A673 (cell line): ENCODE measurements at regions of chr2 and their contacts with region 1.

Region 1: GRCh38 chr2:168773719-168774521 is 28.5 kb upstream of the NOSTRIN start:
- DNase-seq: peak; percentile 88
- H3K4me3 ChIP-seq: no peak overlapping the region
- H3K27ac ChIP-seq: no peak overlapping the region
- H3K4me1 ChIP-seq: peaks cover 4% of the 10 kb centered on the region
- H3K27me3 ChIP-seq: no peaks in the 10 kb centered on the region
- CTCF ChIP-seq: peak; percentile 97

Region 2: DNA sequence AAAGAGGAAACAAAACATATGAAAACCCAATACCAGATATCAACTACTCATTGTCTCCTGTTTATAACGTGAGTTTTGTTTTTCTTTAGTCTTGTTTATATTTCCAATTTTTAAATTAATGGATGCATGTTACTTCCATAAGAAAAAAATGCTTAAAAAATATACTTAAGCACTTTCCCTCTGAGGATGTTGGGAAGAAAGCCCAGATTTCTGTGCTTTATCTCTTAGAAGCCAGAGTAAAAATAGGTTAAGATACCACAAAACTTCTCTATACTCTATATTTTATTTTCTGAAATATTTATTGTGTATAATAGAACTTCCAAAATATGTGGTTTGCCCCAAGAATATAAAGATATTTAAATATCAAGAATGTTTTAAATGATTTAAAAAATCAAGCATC is 1160.4 kb before region 1 on chr2:
- CTCF ChIA-PET with region 1: no interaction called
- POLR2A ChIA-PET with region 1: no interaction called
- intact Hi-C with region 1: no loop called
- DNase-seq: no peak
- H3K4me3 ChIP-seq: no peak overlapping the region
- H3K27ac ChIP-seq: no peak overlapping the region
- H3K4me1 ChIP-seq: no peaks in the 10 kb centered on the region
- H3K27me3 ChIP-seq: no peaks in the 10 kb centered on the region
- CTCF ChIP-seq: no peak

Region 3: DNA sequence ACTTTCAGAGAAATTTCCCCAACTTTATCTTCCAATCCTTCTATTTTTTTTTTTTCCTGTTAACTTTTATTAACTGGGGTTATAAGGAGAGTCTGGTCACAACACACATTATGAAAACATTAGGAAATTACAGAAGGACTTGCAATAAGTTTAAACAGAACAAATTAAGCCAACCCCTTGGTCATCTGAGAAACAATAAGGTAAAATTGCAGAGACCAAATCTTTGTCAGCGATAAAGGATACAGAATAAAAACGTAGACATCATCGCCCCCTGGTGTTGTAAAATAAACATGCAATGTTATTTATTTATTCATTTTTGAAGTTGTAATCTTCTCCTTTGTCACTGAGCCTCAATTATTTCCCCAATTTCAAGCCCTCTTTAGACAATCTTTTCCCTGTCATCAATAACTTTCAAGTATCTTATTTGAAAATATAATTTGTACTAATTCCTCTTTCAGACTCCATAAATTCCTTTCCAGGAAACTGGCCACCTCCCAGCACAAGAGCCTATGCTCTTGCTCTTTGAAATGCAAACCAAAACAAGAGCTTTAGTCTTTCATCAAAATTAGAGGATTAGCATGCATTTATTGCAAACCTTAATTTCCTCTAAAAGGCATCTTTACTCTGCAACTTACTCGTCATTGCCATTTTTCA is 146.7 kb after region 1 on chr2:
- CTCF ChIA-PET with region 1: no interaction called
- POLR2A ChIA-PET with region 1: no interaction called
- intact Hi-C with region 1: loop called (anchors 1 kb)
- DNase-seq: peak; percentile 58
- H3K4me3 ChIP-seq: no peak overlapping the region
- H3K27ac ChIP-seq: no peak overlapping the region
- H3K4me1 ChIP-seq: no peaks in the 10 kb centered on the region
- H3K27me3 ChIP-seq: peaks cover 6% of the 10 kb centered on the region
- CTCF ChIP-seq: peak; percentile 65